GM18951 (cell line): ENCODE measurements at regions of chr15 and their contacts with region 1.

Region 1: GRCh38 chr15:40421246-40422157 is 15.9 kb downstream of the IVD start:
- POLR2A ChIP-seq: no peak

Region 2: GRCh38 chr15:40038638-40039543 is 382.6 kb before region 1 on chr15 and contains the start of gene SRP14:
- in situ Hi-C with region 1: no loop called
- POLR2A ChIP-seq: peak; percentile 85

Region 3: GRCh38 chr15:40344631-40345120 is 76.8 kb before region 1 on chr15:
- in situ Hi-C with region 1: loop called (anchors 10 kb)
- POLR2A ChIP-seq: no peak

Region 4: GRCh38 chr15:40379853-40380252 is 41.6 kb before region 1 on chr15:
- in situ Hi-C with region 1: loop called (anchors 10 kb)
- POLR2A ChIP-seq: no peak

Region 5: DNA sequence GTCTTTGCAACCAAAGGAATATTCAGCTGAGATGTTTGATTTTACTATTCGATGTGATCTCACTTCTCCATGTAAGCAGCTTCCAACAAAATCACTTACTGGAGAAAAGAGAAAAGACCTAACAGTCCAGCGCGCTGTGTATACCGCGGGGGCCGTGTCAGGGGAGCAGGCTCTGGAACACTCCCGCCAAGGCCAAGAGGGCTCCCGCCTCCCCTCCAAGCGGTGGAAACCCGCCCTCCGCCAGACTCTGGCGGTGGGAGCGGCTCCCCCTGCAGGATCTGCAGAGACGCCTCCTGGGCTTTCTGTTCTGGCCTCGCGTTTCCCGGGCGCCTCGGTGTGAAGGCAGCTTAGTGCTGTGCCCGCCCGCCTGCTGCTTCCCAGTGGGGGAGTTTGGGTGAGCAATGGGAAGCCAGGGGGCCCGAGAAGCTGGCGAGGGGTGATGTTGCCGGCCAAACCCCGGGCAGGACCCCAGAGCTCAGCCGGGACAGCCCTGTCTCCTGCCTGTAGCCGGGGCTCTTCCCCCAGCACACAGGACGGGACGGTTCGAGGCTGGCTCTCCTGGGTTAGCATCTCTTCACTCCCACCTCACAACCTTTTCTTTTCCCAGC is 85.6 kb after region 1 on chr15:
- in situ Hi-C with region 1: no loop called
- POLR2A ChIP-seq: no peak